PC-9 (cell line): ENCODE measurements at regions of chr4 and their contacts with region 1.

Region 1: GRCh38 chr4:37452952-37453280 is 208.4 kb downstream of the NWD2 start:
- DNase-seq: peak; percentile 66 to 83
- H3K4me3 ChIP-seq: peak overlapping the region; percentile 83
- H3K27ac ChIP-seq: no peak overlapping the region
- H3K4me1 ChIP-seq: peaks cover 12% of the 10 kb centered on the region
- H3K27me3 ChIP-seq: no peaks in the 10 kb centered on the region
- CTCF ChIP-seq: peak; percentile 81

Region 2: DNA sequence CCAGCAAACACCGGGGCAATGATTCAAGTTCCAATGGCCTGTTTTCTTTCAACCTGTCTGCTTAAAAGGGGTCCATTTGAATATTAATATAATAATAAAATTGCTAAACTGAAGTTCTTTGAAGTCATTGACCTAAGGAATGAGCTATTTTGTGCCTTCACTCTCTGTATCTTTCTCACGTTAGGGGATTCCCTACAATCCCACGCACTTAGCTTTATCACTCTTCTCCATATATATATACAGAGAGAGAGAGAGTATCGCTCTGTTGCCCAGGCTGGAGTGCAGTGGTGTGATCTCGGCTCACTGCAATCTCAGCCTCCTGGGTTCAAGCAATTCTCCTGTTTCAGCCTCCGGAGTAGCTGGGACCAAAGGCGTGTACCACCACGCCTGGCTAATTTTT is 292.3 kb before region 1 on chr4:
- CTCF ChIA-PET with region 1: no interaction called
- POLR2A ChIA-PET with region 1: no interaction called
- intact Hi-C with region 1: no loop called
- DNase-seq: no peak
- H3K4me3 ChIP-seq: no peak overlapping the region
- H3K27ac ChIP-seq: no peak overlapping the region
- H3K4me1 ChIP-seq: no peaks in the 10 kb centered on the region
- H3K27me3 ChIP-seq: 0 out of 2 replicates have a peak, but pooled peaks cover 4% of the 10 kb centered on the region
- CTCF ChIP-seq: no peak

Region 3: DNA sequence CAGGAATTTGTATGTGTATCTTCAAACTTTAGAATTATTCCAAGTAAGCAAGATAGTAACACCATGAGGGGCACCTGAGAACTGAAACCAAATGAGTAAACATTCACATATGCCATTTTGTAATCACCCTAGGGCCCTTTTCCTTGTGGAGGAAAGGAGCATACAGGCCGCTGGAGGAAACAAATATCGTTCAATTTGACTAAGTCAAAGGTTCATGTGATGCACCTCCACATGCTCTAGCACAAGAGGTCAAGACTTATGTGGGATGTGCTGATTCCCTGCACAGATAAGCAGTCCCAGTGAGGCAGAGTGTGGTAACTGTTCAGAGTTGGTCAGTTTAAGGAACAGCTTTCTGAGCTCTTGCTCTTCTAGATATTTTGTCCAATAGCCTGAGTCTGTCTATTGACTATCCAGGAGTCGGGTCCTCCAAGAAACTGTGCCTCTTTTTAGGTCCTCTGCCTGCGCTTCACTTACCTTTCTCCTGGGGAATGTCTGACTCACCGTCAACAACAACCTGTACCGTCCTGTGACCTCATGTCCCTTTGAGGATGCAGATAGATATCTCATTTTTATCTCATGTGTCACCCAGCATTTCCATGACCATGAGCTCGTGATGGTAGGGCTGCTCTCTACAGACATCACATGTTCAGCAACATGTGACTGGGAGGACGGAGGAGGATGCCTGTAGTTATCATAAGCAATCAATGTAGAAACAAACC is 11.5 kb before region 1 on chr4:
- CTCF ChIA-PET with region 1: interaction called, 10 read pairs
- POLR2A ChIA-PET with region 1: no interaction called
- intact Hi-C with region 1: no loop called
- DNase-seq: peak; percentile 64 to 96
- H3K4me3 ChIP-seq: no peak overlapping the region; the same call in 1 of the 2 replicates
- H3K27ac ChIP-seq: peak overlapping the region; percentile 78
- H3K4me1 ChIP-seq: peaks cover 47% of the 10 kb centered on the region
- H3K27me3 ChIP-seq: no peaks in the 10 kb centered on the region
- CTCF ChIP-seq: no peak

Region 4: GRCh38 chr4:37528166-37528885 is 75.4 kb after region 1 on chr4:
- CTCF ChIA-PET with region 1: interaction called, 3 read pairs
- POLR2A ChIA-PET with region 1: no interaction called
- intact Hi-C with region 1: loop called (anchors 1 kb)
- DNase-seq: peak; percentile 11 to 73
- H3K4me3 ChIP-seq: no peak overlapping the region
- H3K27ac ChIP-seq: no peak overlapping the region
- H3K4me1 ChIP-seq: no peaks in the 10 kb centered on the region; the same call in 1 of the 2 replicates
- H3K27me3 ChIP-seq: no peaks in the 10 kb centered on the region
- CTCF ChIP-seq: no peak; the same call in 1 of the 2 replicates

Region 5: GRCh38 chr4:37603070-37603468 is 150.2 kb after region 1 on chr4:
- CTCF ChIA-PET with region 1: interaction called, 11 read pairs
- POLR2A ChIA-PET with region 1: no interaction called
- intact Hi-C with region 1: loop called (anchors 1 kb)
- DNase-seq: peak; percentile 46 to 73
- H3K4me3 ChIP-seq: no peak overlapping the region
- H3K27ac ChIP-seq: no peak overlapping the region
- H3K4me1 ChIP-seq: peaks cover 9% of the 10 kb centered on the region
- H3K27me3 ChIP-seq: no peaks in the 10 kb centered on the region
- CTCF ChIP-seq: peak; percentile 98

Region 6: GRCh38 chr4:37802068-37802666 is 349.3 kb after region 1 on chr4:
- CTCF ChIA-PET with region 1: interaction called, 11 read pairs
- POLR2A ChIA-PET with region 1: no interaction called
- intact Hi-C with region 1: loop called (anchors 1 kb)
- DNase-seq: peak; percentile 63 to 75
- H3K4me3 ChIP-seq: no peak overlapping the region
- H3K27ac ChIP-seq: no peak overlapping the region
- H3K4me1 ChIP-seq: peaks cover 6% of the 10 kb centered on the region; the same call in 1 of the 2 replicates
- H3K27me3 ChIP-seq: no peaks in the 10 kb centered on the region
- CTCF ChIP-seq: peak; percentile 65

Region 7: GRCh38 chr4:38034986-38035882 is 582.3 kb after region 1 on chr4:
- CTCF ChIA-PET with region 1: no interaction called
- POLR2A ChIA-PET with region 1: no interaction called
- intact Hi-C with region 1: loop called (anchors 5 kb)
- DNase-seq: peak; percentile 10 to 48
- H3K4me3 ChIP-seq: no peak overlapping the region
- H3K27ac ChIP-seq: no peak overlapping the region
- H3K4me1 ChIP-seq: no peaks in the 10 kb centered on the region
- H3K27me3 ChIP-seq: no peaks in the 10 kb centered on the region
- CTCF ChIP-seq: peak; percentile 85